Astrocyte of the cerebellum (primary cell): ENCODE measurements at regions of chr2 and their contacts with region 1.

Region 1: GRCh38 chr2:175823002-175823706 is 178.9 kb downstream of the LNPK start:
- DNase-seq: peak; percentile 64
- H3K4me3 ChIP-seq: no peak overlapping the region
- CTCF ChIP-seq: no peak

Region 2: DNA sequence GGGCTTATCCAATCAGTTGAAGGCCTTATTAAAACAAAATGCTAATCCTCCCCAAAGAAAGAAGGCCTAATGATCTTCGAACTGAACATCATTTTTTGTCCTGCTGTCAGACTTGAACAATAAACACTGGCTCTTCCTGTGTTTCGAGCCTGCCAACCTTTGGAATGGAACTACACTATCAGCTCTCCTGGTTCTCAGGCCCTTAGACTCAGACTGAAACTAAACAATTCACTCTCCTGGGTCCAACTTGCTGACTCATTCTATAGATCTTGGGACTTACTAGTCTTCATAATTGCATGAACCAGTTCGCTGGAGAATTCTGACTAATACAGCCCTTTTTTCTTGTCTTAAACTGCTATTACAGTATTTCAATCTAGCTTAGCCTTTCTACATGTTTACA is 56.3 kb before region 1 on chr2:
- in situ Hi-C with region 1: no loop called
- DNase-seq: no peak
- H3K4me3 ChIP-seq: no peak overlapping the region
- CTCF ChIP-seq: no peak

Region 3: DNA sequence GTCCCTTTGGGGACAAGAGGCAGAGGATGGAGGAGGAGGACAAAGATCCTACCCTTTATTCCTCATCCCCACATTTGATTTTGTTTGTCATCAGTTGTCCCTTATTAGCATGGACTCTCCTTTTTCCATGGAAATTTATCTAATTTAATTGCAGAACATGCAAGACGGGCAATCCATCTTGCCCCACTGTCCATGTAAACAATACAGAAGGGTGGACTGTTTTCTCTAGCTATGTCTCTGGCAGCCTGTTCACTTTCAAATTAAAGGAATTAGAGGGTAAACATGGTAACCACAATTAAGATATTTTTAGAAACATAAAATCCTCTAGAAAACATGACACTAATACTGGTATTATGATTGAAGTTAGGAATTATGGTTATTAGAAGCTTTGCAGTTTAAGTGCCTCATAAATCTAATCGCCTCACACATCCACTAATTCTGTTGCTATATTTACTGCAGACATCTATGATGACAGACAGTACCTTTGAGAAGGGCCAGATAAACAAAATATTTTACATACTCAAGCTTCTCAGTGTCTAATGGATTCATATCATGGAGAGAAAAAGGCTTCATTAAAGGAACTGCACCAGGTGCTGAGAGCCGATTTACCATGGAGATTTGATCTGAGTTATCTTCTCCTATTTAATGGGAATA is 36.6 kb before region 1 on chr2:
- in situ Hi-C with region 1: loop called (anchors 5 kb)
- DNase-seq: no peak
- H3K4me3 ChIP-seq: no peak overlapping the region
- CTCF ChIP-seq: no peak

Region 4: GRCh38 chr2:175999283-175999819 is 176.2 kb after region 1 on chr2:
- in situ Hi-C with region 1: no loop called
- DNase-seq: no peak
- H3K4me3 ChIP-seq: no peak overlapping the region
- CTCF ChIP-seq: no peak

Region 5: GRCh38 chr2:176096986-176097819 is 274.0 kb after region 1 on chr2:
- in situ Hi-C with region 1: no loop called
- DNase-seq: peak; percentile 27
- H3K4me3 ChIP-seq: peak overlapping the region; percentile 17
- CTCF ChIP-seq: peak; percentile 81